Head of caudate nucleus (tissue), 42 donors: ENCODE measurements at regions of chr15 and their contacts with region 1.

Region 1: GRCh38 chr15:69576035-69576526 is 123.5 kb downstream of the RPLP1 start:
- DNase-seq: peak; percentile 53 to 84 (median 72)

Region 2: GRCh38 chr15:68484696-68485400 is 1091.2 kb before region 1 on chr15:
- intact Hi-C with region 1: no loop called
- DNase-seq: no peak

Region 3: DNA sequence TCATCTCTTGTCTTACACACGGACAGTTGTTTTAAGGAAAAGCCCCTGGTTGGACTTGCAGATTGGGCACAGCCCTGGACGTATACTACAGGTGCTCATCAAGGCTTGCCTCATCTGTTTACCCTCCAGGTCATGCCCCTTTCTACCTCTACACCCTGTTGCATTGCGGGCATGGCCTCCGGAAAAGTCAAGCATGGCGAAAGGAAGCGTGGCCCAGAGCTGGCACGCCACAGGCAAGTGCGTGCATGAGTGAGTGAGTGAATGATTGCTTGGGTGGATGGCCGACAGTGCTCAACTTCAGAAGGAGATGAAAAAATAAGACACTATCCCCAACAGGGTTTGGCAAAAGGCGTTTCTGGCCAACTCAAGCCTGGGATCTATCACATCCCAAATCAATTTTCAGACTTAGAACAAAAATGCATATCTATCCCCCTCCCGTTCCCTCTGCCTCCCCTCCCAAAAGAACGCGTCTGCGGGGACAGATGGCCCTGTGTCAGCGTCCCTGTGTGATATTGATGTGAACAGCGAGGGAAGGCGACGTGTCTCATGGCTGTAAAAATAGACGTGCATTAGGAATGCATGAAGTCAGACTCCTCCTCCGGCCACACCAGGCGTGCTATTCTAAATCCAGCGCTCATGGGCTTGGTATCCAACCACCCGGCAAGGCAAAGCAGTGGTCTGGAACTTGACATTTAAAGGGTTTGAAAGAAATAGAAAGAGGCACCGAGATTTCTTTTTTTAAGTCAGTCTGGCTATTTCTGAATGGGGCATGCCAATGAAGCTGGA is 27.5 kb before region 1 on chr15:
- intact Hi-C with region 1: no loop called
- DNase-seq: no peak

Region 4: GRCh38 chr15:69643476-69643875 is 67.4 kb after region 1 on chr15:
- intact Hi-C with region 1: no loop called
- DNase-seq: peak in 3 of 42 donors; percentile 8 to 13 (median 12)

Region 5: GRCh38 chr15:70097337-70098169 is 521.5 kb after region 1 on chr15 and contains the start of gene TLE3:
- intact Hi-C with region 1: loop called (anchors 10 kb)
- DNase-seq: peak; percentile 96 to 100 (median 99)